ENCODE measurements at regions of chr16 and their contacts with region 1.

Region 1: GRCh38 chr16:3150346-3151218 is 15.8 kb downstream of the ZNF213 start:
- DNase-seq: peak; percentile 98
- H3K4me3 ChIP-seq: peak overlapping the region; percentile 78 to 91
- H3K27ac ChIP-seq: peak overlapping the region; percentile 66 to 73
- H3K4me1 ChIP-seq: peaks cover 0 to 13% of the 10 kb centered on the region in 2 experiments; a peak in 1 of 4 replicates
- H3K27me3 ChIP-seq: no peaks in the 10 kb centered on the region
- CTCF ChIP-seq: no peak
- EP300 ChIP-seq: peak in 1 of 2 experiments; percentile 50; a peak in 1 of 4 replicates
- RAD21 ChIP-seq: no peak

Region 2: DNA sequence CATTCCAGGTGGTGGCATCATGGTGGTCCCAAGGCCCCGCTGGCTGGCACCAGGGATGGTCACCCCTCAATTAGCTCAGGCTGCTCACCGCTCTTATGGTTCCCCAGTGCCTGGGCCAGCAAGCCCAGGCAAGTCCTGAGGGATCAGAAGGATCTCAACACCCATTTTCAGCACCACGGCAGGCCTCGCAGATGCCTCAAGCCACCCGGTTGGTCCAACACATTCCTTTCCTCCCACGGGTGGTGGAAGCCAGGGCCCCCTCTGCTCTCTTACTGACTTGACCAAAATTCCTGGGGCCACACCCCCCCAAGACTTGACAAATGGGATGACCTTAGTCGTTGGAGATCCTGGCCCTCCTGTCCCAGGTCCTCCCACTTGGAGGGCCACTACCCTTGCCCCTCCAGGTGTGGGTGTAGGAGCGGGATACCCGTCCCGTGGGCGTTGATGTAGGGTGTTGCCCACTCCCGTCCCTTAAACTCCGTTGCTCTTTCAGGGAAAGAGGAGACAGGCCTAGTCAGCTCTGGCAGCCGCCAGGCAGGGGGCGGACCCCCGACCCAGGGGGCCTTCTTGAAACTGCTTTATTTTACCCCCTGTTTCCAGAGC is 32.3 kb before region 1 on chr16:
- CTCF ChIA-PET with region 1: no interaction called
- POLR2A ChIA-PET with region 1: no interaction called
- DNase-seq: no peak
- H3K4me3 ChIP-seq: no peak overlapping the region
- H3K27ac ChIP-seq: no peak overlapping the region
- H3K4me1 ChIP-seq: peaks cover 0 to 13% of the 10 kb centered on the region in 2 experiments; a peak in 1 of 4 replicates
- H3K27me3 ChIP-seq: no peaks in the 10 kb centered on the region
- CTCF ChIP-seq: no peak
- EP300 ChIP-seq: no peak
- RAD21 ChIP-seq: no peak

Region 3: DNA sequence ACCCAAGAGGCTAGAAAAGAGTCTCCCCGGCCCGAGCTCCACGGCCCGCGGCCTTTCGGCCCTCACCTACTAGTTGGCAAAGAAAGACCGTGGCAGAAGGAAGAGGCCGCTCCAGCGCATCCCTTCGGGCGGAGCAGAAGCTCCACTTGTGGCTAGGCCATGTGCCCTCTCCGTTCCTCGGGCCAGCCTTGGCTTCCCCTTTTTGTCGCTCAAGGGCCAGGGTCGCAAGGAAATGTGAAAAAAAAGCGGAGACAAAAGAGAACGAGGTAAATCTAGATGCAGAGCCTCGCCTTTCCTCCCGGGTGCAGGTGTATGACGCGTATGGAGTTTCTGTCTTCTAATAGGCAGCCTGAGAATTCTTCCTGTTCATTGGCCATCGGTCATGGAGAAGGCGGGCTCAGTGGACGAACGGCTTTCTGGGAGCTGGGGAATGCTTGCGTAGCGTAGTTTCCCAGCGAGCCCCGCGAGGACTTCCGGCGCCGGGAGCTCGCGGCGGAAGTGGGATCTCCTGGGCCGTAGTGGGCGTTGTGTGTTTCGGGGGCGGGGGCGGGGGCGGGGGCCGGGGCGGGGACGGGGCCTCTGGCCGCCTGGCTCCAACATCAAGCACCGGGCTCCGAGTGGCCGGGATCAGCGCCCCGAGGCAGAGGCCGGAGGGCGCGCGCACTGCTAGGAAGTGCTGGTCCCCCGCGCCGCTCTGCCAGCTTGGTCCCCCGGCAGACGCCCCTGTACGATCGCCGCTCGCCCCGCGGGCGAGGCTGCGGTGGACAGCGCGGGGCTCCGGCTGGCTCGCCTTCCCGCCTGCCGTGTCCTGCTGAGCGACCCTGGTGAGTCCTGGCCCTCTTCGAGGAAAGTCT is 15.8 kb before region 1 on chr16 and contains the start of gene ZNF213:
- CTCF ChIA-PET with region 1: interaction called, 62 read pairs
- POLR2A ChIA-PET with region 1: interaction called, 18 read pairs
- DNase-seq: peak; percentile 94
- H3K4me3 ChIP-seq: peak within 1 kb of the TSS; percentile 96 to 97
- H3K27ac ChIP-seq: peak within 1 kb of the TSS; percentile 77 to 88
- H3K4me1 ChIP-seq: peaks cover 2 to 8% of the 10 kb centered on the region in 2 experiments; a peak in 3 of 4 replicates
- H3K27me3 ChIP-seq: no peaks in the 10 kb centered on the region
- CTCF ChIP-seq: no peak
- EP300 ChIP-seq: no peak
- RAD21 ChIP-seq: no peak
- polyA plus RNA-seq, gene ZNF213: 0.83 and 1.1 TPM in 2 replicates

Region 4: DNA sequence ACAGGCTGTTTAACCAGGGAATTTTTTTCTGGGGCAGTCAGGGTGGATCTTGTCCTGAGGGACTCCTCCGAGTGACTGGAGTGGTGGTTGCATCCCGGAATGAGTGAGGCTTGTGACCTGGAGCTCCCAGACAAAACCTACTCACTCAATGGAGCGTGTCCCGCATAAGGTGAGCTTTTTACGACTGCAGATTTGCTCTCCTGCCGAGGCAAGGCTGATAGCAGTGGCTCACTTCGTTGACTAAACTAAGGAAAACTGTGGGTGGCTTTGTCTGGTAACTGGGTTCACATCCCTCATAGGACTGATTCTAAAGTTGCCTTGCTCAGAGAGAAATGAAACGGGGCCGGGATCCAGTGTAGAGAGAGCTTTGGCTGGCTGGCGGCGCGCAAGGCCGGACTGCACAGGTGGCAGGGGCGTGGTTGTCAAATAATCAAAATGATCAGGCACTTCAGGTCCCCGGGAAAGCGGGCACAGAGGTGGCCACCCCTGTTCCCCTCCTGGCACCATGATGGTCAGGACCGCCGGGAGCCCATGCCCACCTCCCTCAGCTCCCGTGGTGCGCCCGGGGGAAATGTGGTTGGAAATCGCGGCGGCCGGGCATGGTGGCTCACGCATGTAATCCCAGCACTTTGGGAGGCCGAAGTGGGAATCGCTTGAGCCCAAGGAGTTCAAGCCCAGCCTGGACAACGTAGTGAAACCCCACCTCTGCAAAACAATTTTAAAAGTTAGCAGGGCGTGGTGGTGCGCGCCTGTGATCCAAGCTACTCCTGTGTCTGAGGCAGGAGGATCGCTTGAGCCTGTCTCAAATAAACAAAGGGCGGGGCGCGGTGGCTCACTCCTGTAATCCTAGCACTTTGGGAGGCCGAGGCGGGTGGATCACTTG is 10.8 kb after region 1 on chr16:
- CTCF ChIA-PET with region 1: interaction called, 12 read pairs
- POLR2A ChIA-PET with region 1: no interaction called
- DNase-seq: no peak
- H3K4me3 ChIP-seq: no peak overlapping the region
- H3K27ac ChIP-seq: no peak overlapping the region
- H3K4me1 ChIP-seq: peaks cover 0 to 8% of the 10 kb centered on the region in 2 experiments; a peak in 1 of 4 replicates
- H3K27me3 ChIP-seq: no peaks in the 10 kb centered on the region; the same call in 1 of the 2 replicates
- CTCF ChIP-seq: no peak
- EP300 ChIP-seq: no peak
- RAD21 ChIP-seq: no peak

Region 5: GRCh38 chr16:3166510-3166895 is 15.9 kb after region 1 on chr16:
- CTCF ChIA-PET with region 1: interaction called, 52 read pairs
- POLR2A ChIA-PET with region 1: no interaction called
- DNase-seq: no peak
- H3K4me3 ChIP-seq: no peak overlapping the region
- H3K27ac ChIP-seq: no peak overlapping the region
- H3K4me1 ChIP-seq: peaks cover 0 to 4% of the 10 kb centered on the region in 2 experiments; a peak in 1 of 4 replicates
- H3K27me3 ChIP-seq: peaks cover 37% of the 10 kb centered on the region
- CTCF ChIP-seq: no peak
- EP300 ChIP-seq: no peak
- RAD21 ChIP-seq: no peak

Region 6: GRCh38 chr16:3171855-3172593 is 21.4 kb after region 1 on chr16:
- CTCF ChIA-PET with region 1: interaction called, 52 read pairs
- POLR2A ChIA-PET with region 1: no interaction called
- DNase-seq: peak; percentile 51
- H3K4me3 ChIP-seq: no peak overlapping the region; a peak in 1 of 4 replicates
- H3K27ac ChIP-seq: no peak overlapping the region
- H3K4me1 ChIP-seq: peaks cover 0 to 5% of the 10 kb centered on the region in 2 experiments; a peak in 1 of 4 replicates
- H3K27me3 ChIP-seq: peaks cover 85% of the 10 kb centered on the region
- CTCF ChIP-seq: no peak
- EP300 ChIP-seq: no peak
- RAD21 ChIP-seq: no peak

Region 7: DNA sequence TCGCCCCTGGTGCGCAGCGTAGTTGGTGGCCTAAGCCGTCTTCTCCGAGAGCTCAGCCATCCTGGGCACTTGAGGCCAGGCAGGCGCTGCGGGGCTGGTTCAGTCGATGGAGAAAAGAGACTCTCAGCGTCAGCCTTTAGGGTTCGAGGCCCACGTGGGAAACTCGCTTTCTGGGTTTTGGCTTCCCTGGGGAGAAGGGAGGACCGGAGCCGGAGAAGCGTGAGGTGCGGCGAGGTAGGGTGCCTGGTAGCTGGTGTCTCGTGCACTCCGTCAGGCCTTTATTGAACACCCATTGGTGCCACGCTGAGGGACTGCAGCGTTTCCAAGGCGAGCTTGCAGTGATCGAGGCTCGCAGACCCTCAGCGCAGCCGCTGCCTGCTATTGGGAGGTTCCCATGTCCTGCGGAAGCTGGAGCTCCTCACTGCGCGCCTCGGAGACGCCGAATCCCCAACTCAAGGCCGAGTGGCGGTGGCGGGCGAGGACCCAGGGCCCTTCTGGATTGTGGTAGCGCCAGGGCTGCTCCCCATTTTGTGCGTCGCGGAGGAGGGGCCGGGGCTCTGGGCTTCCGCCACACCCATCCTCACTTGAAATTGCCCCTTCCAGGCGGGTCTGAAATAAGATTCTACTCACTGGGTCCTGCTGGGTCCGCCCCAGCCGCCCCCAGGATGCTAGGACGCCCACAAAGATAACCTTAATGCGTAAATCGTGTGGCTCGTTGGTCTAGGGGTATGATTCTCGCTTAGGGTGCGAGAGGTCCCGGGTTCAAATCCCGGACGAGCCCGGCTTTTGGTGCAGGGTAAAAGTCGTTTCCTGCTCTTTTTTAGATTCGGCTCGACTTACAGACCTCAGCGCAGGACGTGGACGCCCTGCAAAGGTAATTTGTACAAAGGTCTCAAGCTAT is 38.6 kb after region 1 on chr16:
- CTCF ChIA-PET with region 1: interaction called, 10 read pairs
- POLR2A ChIA-PET with region 1: interaction called, 5 read pairs
- DNase-seq: peak; percentile 76
- H3K4me3 ChIP-seq: peak overlapping the region; percentile 63 to 90
- H3K27ac ChIP-seq: peak overlapping the region in 1 of 2 experiments; percentile 4; a peak in 1 of 4 replicates
- H3K4me1 ChIP-seq: peaks cover 0 to 8% of the 10 kb centered on the region in 2 experiments; a peak in 2 of 4 replicates
- H3K27me3 ChIP-seq: peaks cover 8% of the 10 kb centered on the region; the same call in 1 of the 2 replicates
- CTCF ChIP-seq: no peak
- EP300 ChIP-seq: no peak
- RAD21 ChIP-seq: no peak

Measured in SK-N-SH (cell line).